Mammary epithelial cell (primary cell): ENCODE measurements at regions of chr12 and their contacts with region 1.

Region 1: GRCh38 chr12:57332646-57333312 is 81.8 kb upstream of the STAC3 start:
- DNase-seq: peak; percentile 44
- H3K4me3 ChIP-seq: no peak overlapping the region
- H3K27ac ChIP-seq: no peak overlapping the region
- H3K4me1 ChIP-seq: no peaks in the 10 kb centered on the region
- H3K27me3 ChIP-seq: no peaks in the 10 kb centered on the region
- CTCF ChIP-seq: no peak

Region 2: GRCh38 chr12:57377103-57377840 is 44.5 kb after region 1 on chr12:
- CTCF ChIA-PET with region 1: no interaction called
- dilution Hi-C with region 1: loop called (anchors 5 kb)
- in situ Hi-C with region 1: no loop called
- intact Hi-C with region 1: no loop called
- DNase-seq: no peak
- H3K4me3 ChIP-seq: no peak overlapping the region
- H3K27ac ChIP-seq: no peak overlapping the region
- H3K4me1 ChIP-seq: peaks cover 5% of the 10 kb centered on the region
- H3K27me3 ChIP-seq: no peaks in the 10 kb centered on the region
- CTCF ChIP-seq: no peak